Activated CD4-positive, alpha-beta memory T cell treated with anti-CD3 and anti-CD28 coated beads for 36 hours (primary cell): ENCODE measurements at regions of chr3 and their contacts with region 1.

Region 1: DNA sequence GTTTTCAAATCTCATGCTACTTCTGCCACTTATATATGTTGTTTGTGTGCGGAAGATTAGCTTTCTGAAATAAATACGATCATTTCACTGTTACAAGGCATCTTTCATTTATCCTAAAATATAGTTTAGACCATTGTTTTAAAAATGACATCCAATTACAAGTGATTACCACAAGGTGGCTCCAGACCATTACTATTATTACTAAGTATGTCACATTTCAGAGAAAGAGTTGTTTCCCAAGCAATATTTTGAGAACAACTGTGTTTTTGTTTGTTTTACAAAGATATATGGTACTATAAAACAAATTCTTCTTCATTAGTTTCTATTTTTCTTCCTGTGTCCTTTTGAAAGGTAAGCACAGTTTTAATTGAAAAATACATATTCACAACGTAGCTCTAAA is 136.0 kb upstream of the RAP2B start:
- DNase-seq: no peak
- H3K4me3 Mint-ChIP-seq: no peak overlapping the region
- H3K27ac Mint-ChIP-seq: no peak overlapping the region
- H3K4me1 Mint-ChIP-seq: no peaks in the 10 kb centered on the region
- H3K27me3 Mint-ChIP-seq: peaks cover 6% of the 10 kb centered on the region

Region 2: GRCh38 chr3:152969561-152970240 is 56.3 kb before region 1 on chr3:
- CTCF ChIA-PET with region 1: no interaction called
- POLR2A ChIA-PET with region 1: no interaction called
- intact Hi-C with region 1: no loop called
- DNase-seq: no peak
- H3K4me3 Mint-ChIP-seq: no peak overlapping the region
- H3K27ac Mint-ChIP-seq: no peak overlapping the region
- H3K4me1 Mint-ChIP-seq: no peaks in the 10 kb centered on the region
- H3K27me3 Mint-ChIP-seq: no peaks in the 10 kb centered on the region

Region 3: GRCh38 chr3:153001210-153002078 is 24.6 kb before region 1 on chr3:
- CTCF ChIA-PET with region 1: no interaction called
- POLR2A ChIA-PET with region 1: no interaction called
- intact Hi-C with region 1: no loop called
- DNase-seq: no peak
- H3K4me3 Mint-ChIP-seq: no peak overlapping the region
- H3K27ac Mint-ChIP-seq: no peak overlapping the region
- H3K4me1 Mint-ChIP-seq: no peaks in the 10 kb centered on the region
- H3K27me3 Mint-ChIP-seq: peaks cover 7% of the 10 kb centered on the region

Region 4: GRCh38 chr3:153061938-153062528 is 36.0 kb after region 1 on chr3:
- CTCF ChIA-PET with region 1: no interaction called
- POLR2A ChIA-PET with region 1: no interaction called
- intact Hi-C with region 1: no loop called
- DNase-seq: no peak
- H3K4me3 Mint-ChIP-seq: no peak overlapping the region
- H3K27ac Mint-ChIP-seq: no peak overlapping the region
- H3K4me1 Mint-ChIP-seq: no peaks in the 10 kb centered on the region
- H3K27me3 Mint-ChIP-seq: no peaks in the 10 kb centered on the region

Region 5: DNA sequence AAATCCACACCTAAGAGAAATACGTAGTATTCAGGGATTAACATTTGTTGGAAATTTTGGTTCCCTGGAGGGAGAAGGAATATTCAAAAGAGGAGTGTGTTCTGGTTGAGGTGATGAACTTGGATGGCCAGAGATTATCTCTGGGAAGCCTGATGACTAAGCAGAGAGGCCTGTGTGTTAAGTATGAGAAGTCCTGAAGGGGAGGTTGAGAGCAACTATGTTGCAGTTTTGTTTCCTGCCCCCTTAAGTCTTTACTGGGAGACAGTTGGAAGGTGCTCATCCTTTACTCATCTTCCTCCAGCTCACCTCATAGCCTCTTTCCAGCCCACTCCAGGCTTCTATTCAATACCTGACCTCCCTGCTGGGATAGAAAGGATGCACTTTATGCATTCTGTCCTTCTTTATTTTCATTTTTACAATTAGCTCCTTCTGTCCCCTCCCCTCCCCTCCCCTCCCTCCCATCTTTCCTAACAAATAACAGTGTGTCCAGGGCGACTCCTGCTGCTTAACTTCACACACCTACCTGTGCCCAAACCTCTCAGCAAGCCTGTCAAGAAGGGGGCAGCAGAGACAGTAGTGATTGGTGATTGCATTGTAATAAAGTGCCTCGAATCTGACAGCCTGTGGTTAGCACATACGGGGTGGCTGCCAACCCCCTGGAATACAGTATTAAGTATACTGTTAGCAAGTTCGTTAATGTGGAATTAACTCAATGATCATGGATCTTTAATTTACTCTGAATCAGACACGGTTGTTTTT is 147.9 kb after region 1 on chr3:
- CTCF ChIA-PET with region 1: no interaction called
- POLR2A ChIA-PET with region 1: no interaction called
- intact Hi-C with region 1: no loop called
- DNase-seq: no peak
- H3K4me3 Mint-ChIP-seq: no peak overlapping the region
- H3K27ac Mint-ChIP-seq: peak overlapping the region; percentile 25
- H3K4me1 Mint-ChIP-seq: peaks cover 16% of the 10 kb centered on the region
- H3K27me3 Mint-ChIP-seq: no peaks in the 10 kb centered on the region

Region 6: DNA sequence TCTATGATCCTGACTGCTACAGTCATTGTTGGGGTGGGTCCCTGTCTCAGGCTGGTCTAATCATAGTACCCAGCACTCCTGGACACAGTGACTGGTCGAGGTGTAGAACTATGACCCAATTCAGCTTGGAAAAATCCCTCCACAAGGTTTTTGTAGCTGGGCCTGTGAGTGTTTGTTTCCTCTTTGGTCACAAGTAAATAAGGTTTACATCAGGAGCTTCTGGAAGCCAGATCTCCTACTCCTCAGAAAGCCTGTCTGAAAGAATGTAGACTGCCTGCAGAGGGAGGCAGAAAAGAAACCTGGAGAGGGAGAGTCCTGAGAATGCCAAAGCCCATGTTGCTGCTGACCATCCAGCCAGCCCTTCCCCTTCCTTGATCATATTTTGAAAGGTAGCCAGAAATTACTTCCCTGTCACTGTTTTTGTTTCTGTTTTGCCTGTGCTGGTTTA is 259.2 kb after region 1 on chr3:
- CTCF ChIA-PET with region 1: no interaction called
- POLR2A ChIA-PET with region 1: no interaction called
- intact Hi-C with region 1: loop called (anchors 5 kb)
- DNase-seq: no peak
- H3K4me3 Mint-ChIP-seq: no peak overlapping the region
- H3K27ac Mint-ChIP-seq: peak overlapping the region; percentile 60
- H3K4me1 Mint-ChIP-seq: peaks cover 48% of the 10 kb centered on the region
- H3K27me3 Mint-ChIP-seq: no peaks in the 10 kb centered on the region

Region 7: GRCh38 chr3:153595186-153595815 is 569.3 kb after region 1 on chr3:
- CTCF ChIA-PET with region 1: interaction called, 5 read pairs
- POLR2A ChIA-PET with region 1: no interaction called
- intact Hi-C with region 1: loop called (anchors 5 kb)
- DNase-seq: no peak
- H3K4me3 Mint-ChIP-seq: no peak overlapping the region
- H3K27ac Mint-ChIP-seq: no peak overlapping the region
- H3K4me1 Mint-ChIP-seq: peaks cover 13% of the 10 kb centered on the region
- H3K27me3 Mint-ChIP-seq: no peaks in the 10 kb centered on the region

Region 8: DNA sequence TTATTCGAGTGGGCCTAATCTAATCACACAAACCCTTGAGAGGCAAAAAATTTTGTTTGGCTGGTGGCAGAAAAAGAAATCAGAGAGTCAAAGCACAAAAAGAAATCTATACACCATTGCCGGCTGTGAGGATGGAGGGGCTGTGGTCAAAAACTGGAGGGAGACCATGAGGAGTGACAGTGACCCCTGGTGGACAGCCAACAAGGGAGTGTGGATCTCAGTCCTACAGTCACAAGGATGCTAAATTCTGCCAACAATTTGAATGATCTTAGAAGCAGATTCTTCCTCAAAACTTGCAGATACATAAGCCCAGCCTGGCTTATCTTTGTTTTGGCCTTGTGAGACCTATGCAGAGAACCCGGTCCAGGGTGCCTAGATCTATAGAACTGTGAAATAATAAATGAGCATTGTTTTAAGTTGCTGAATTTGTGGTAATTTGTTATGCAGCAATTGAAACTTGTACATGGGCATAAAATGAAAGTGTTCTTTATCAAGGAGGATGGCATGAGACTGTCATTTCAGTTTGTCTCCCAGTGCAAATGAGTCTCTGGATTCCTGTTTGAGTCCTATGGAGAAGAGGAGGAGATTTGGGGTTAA is 992.2 kb after region 1 on chr3:
- CTCF ChIA-PET with region 1: interaction called, 8 read pairs
- POLR2A ChIA-PET with region 1: no interaction called
- intact Hi-C with region 1: loop called (anchors 5 kb)
- DNase-seq: peak; percentile 41
- H3K4me3 Mint-ChIP-seq: no peak overlapping the region
- H3K27ac Mint-ChIP-seq: no peak overlapping the region
- H3K4me1 Mint-ChIP-seq: no peaks in the 10 kb centered on the region
- H3K27me3 Mint-ChIP-seq: no peaks in the 10 kb centered on the region

Region 9: GRCh38 chr3:154252759-154253638 is 1227.0 kb after region 1 on chr3:
- CTCF ChIA-PET with region 1: interaction called, 4 read pairs
- POLR2A ChIA-PET with region 1: no interaction called
- intact Hi-C with region 1: loop called (anchors 5 kb)
- DNase-seq: peak; percentile 85
- H3K4me3 Mint-ChIP-seq: no peak overlapping the region
- H3K27ac Mint-ChIP-seq: no peak overlapping the region
- H3K4me1 Mint-ChIP-seq: peaks cover 3% of the 10 kb centered on the region
- H3K27me3 Mint-ChIP-seq: no peaks in the 10 kb centered on the region